K562 (cell line): ENCODE measurements at regions of chr5 and their contacts with region 1.

Region 1: DNA sequence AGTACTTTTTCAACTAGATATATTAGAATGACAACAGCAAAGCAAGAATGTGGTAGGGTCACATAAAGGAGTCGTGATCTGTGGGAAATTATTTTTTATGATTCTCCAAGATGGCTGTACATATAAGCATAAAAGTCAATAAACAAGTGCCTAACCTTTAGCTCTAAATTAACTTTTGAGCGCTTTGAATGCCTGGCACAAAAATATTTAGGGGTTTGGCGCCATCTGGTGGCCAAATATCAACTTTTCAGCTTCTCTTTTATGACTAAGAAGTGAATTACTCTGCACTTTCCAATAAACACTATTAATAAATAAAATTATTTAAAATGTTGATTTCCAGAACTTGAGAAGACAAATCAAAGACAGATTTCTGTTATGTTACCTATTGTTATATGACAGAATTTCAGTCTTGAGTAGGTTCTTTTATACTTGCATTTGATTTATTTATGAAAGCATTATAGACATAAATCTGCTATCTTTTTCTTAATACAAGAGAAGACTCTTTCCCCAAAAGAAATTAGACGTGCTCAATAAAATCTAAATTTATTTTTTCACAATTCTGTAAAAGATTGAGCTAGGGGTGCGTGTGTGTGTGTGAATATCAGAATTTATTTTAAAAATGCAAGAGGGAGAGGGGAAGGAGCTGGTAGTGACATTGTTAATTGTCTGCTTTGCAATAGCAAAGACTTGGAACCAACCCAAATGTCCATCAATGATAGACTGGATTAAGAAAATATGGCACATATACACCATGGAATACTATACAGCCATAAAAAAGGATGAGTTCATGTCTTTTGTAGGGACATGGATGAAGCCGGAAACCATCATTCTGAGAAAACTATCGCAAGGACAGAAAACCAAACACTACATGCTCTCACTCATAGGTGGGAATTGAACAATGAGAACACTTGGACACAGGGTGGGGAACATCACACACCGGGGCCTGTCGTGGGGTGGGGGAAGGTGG is 36.7 kb upstream of the ARRDC3 start:
- DNase-seq: peak; percentile 19 to 77 (median 41)
- ATAC-seq: peak; percentile 74
- H3K4me3 ChIP-seq: no peak overlapping the region
- H3K27ac ChIP-seq: no peak overlapping the region
- H3K4me1 ChIP-seq: no peaks in the 10 kb centered on the region
- H3K27me3 ChIP-seq: no peaks in the 10 kb centered on the region
- CTCF ChIP-seq: peak; percentile 49 to 76 (median 52); a peak in 5 of 6 replicates
- EP300 ChIP-seq: no peak
- POLR2A ChIP-seq: no peak
- RAD21 ChIP-seq: peak; percentile 81 to 85

Region 2: GRCh38 chr5:90802474-90803317 is 617.2 kb before region 1 on chr5:
- CTCF ChIA-PET with region 1: interaction called, 5 read pairs
- POLR2A ChIA-PET with region 1: no interaction called
- in situ Hi-C with region 1: no loop called
- intact Hi-C with region 1: loop called (anchors 5 kb)
- DNase-seq: peak; percentile 36 to 51 (median 44)
- ATAC-seq: peak; percentile 96
- H3K4me3 ChIP-seq: no peak overlapping the region
- H3K27ac ChIP-seq: no peak overlapping the region
- H3K4me1 ChIP-seq: no peaks in the 10 kb centered on the region
- H3K27me3 ChIP-seq: no peaks in the 10 kb centered on the region
- CTCF ChIP-seq: peak; percentile 60 to 73 (median 70)
- EP300 ChIP-seq: no peak
- POLR2A ChIP-seq: peak; percentile 45; the same call in 1 of the 2 replicates
- RAD21 ChIP-seq: 0 out of 4 replicates have a peak, but pooled peaks of 1 of the 2 experiments have one; percentile 19

Region 3: DNA sequence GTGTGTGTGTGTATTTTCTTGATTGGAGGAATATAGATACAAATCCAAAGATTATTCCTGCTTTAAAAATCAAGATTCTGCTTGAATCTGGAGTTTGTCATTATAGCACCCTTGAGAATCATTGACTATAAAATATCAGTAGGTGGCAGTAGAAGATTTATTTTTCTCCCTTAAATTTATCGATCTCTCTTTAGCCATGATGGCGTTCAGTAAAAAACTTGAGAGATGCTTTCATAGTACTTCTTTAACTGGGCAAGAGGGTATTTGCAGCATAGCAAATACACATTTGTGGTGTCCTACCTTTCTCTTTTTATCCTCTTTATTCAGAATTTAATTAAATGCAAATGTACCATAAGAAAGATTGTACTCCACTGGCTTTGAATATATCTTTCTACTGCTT is 553.5 kb before region 1 on chr5:
- CTCF ChIA-PET with region 1: interaction called, 27 read pairs
- POLR2A ChIA-PET with region 1: no interaction called
- in situ Hi-C with region 1: no loop called
- intact Hi-C with region 1: loop called (anchors 1 kb)
- DNase-seq: peak; percentile 18 to 47 (median 31)
- ATAC-seq: peak; percentile 84
- H3K4me3 ChIP-seq: no peak overlapping the region
- H3K27ac ChIP-seq: no peak overlapping the region; the same call in 2 of the 3 replicates
- H3K4me1 ChIP-seq: no peaks in the 10 kb centered on the region
- H3K27me3 ChIP-seq: no peaks in the 10 kb centered on the region
- CTCF ChIP-seq: peak; percentile 30 to 73 (median 32); a peak in 3 of 6 replicates
- EP300 ChIP-seq: no peak
- POLR2A ChIP-seq: no peak
- RAD21 ChIP-seq: peak; percentile 68 to 75

Region 4: DNA sequence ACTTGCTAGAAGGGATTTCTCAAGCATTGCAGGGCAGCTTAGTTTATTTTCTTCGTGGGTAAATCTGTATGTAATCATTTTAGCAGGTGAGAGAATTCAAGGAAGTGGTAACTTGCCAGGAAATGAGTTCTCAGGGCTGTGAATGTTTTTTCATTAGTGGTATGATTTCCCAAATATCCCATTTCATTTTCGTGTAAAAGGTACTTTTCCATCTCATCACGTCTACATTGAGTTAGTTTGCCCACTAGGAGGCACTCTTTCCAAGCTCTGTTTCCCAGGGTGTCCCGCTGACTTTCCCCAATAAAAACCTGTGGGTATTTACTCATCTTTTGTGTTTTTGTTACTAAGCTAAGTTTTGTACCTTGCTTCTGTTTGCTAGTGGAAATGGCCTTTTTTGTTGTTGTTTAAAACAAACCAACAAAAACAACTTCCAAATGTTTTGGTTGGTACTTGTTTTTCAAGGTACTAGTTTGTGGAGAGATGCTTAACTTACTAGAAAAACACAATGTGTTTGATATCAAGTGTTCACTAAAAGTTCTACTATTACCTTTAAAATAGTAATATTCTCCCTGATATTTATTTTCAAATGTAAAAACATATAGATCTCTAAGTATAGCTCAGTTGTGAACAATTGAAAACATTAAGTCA is 487.7 kb before region 1 on chr5:
- CTCF ChIA-PET with region 1: interaction called, 7 read pairs
- POLR2A ChIA-PET with region 1: no interaction called
- in situ Hi-C with region 1: no loop called
- intact Hi-C with region 1: loop called (anchors 5 kb)
- DNase-seq: peak; percentile 49 to 67 (median 56)
- ATAC-seq: peak; percentile 86
- H3K4me3 ChIP-seq: no peak overlapping the region
- H3K27ac ChIP-seq: no peak overlapping the region
- H3K4me1 ChIP-seq: peaks cover 0 to 12% of the 10 kb centered on the region in 2 experiments; a peak in 2 of 5 replicates
- H3K27me3 ChIP-seq: no peaks in the 10 kb centered on the region
- CTCF ChIP-seq: peak; percentile 60 to 82 (median 81); a peak in 5 of 6 replicates
- EP300 ChIP-seq: no peak
- POLR2A ChIP-seq: no peak
- RAD21 ChIP-seq: peak; percentile 74 to 78

Region 5: GRCh38 chr5:91101600-91102379 is 318.1 kb before region 1 on chr5:
- CTCF ChIA-PET with region 1: interaction called, 23 read pairs
- POLR2A ChIA-PET with region 1: no interaction called
- in situ Hi-C with region 1: no loop called
- intact Hi-C with region 1: loop called (anchors 1 kb)
- DNase-seq: peak; percentile 54 to 70 (median 63)
- ATAC-seq: peak; percentile 99
- H3K4me3 ChIP-seq: no peak overlapping the region
- H3K27ac ChIP-seq: no peak overlapping the region
- H3K4me1 ChIP-seq: no peaks in the 10 kb centered on the region
- H3K27me3 ChIP-seq: no peaks in the 10 kb centered on the region
- CTCF ChIP-seq: peak; percentile 65 to 86 (median 69)
- EP300 ChIP-seq: no peak
- POLR2A ChIP-seq: no peak
- RAD21 ChIP-seq: peak; percentile 79 to 93

Region 6: DNA sequence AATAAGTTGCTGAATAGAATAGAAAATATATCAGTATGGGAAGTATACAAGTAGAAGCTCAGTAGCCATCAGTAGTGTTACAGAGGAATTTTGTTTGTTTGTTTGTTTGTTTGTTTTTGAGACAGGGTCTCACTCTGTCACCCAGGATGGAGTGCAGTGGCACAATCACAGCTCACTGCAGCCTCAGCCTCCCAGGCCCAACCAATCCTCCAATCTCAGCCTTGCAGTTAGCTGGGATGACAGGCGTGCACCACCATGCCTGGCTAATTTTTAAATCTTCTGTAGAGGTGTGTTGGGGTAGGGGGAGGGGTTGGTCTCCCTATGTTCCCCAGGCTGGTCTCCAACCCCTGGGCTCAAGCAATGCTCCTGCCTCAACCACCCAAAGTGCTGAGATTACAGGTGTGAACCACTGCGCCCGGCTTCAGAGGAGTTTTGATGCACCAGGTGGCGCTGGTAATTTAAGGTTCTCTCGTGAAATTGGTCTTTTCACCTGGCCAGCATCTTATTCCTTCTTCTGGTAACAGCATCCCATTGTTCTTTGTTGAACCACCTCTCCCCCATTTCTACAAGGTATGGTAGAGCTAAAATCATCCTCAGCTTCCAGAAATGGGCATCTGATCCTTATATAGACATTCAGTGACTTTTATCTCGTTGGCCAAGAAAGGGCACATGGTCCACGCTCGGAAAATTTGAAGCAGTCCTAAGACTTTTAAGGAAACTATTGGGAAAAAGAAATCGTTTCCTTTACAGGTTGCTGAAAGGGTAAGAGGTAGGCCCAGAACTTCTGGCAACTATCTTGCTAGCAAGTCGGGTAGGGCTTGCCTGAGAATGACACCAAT is 193.8 kb before region 1 on chr5:
- CTCF ChIA-PET with region 1: interaction called, 5 read pairs
- POLR2A ChIA-PET with region 1: no interaction called
- in situ Hi-C with region 1: no loop called
- intact Hi-C with region 1: loop called (anchors 1 kb)
- DNase-seq: peak in 2 of 4 experiments; percentile 34 to 50
- ATAC-seq: peak; percentile 79
- H3K4me3 ChIP-seq: no peak overlapping the region
- H3K27ac ChIP-seq: no peak overlapping the region
- H3K4me1 ChIP-seq: no peaks in the 10 kb centered on the region
- H3K27me3 ChIP-seq: no peaks in the 10 kb centered on the region
- CTCF ChIP-seq: peak; percentile 52 to 70 (median 57); a peak in 5 of 6 replicates
- EP300 ChIP-seq: no peak
- POLR2A ChIP-seq: no peak
- RAD21 ChIP-seq: peak; percentile 85 to 93

Region 7: DNA sequence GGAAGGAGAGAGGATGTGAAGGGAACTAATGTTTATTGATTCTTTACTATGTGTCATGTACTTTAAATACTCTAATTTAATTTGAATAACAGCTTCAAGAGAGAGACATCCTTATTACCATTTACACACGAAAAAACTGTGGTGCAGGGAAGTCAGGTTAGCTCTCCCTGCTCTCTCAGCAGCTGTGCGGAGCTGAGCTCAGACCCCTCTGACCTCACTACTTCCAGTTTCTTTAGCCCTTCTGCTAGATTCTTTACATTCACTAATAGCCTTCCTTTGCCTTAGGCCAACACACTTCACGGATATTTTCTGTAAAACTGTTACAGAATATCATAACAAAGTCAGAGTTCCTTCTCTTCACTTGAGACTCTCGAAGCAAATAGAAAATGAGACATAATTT is 94.5 kb after region 1 on chr5:
- CTCF ChIA-PET with region 1: no interaction called
- POLR2A ChIA-PET with region 1: no interaction called
- in situ Hi-C with region 1: no loop called
- intact Hi-C with region 1: no loop called
- DNase-seq: no peak
- ATAC-seq: no peak
- H3K4me3 ChIP-seq: no peak overlapping the region
- H3K27ac ChIP-seq: no peak overlapping the region
- H3K4me1 ChIP-seq: no peaks in the 10 kb centered on the region
- H3K27me3 ChIP-seq: no peaks in the 10 kb centered on the region
- CTCF ChIP-seq: no peak
- EP300 ChIP-seq: no peak
- POLR2A ChIP-seq: no peak
- RAD21 ChIP-seq: no peak